ENCODE measurements at regions of chr5 and their contacts with region 1.

Region 1: GRCh38 chr5:55534436-55535198 is at the start of gene PLPP1:
- DNase-seq: peak; percentile 91 to 95 (median 93)
- H3K4me3 ChIP-seq: peak within 1 kb of the TSS; percentile 82
- H3K27ac ChIP-seq: peak within 1 kb of the TSS; percentile 95 to 97
- H3K4me1 ChIP-seq: peaks cover 5% of the 10 kb centered on the region
- H3K27me3 ChIP-seq: no peaks in the 10 kb centered on the region
- CTCF ChIP-seq: no peak
- EP300 ChIP-seq: no peak
- POLR2A ChIP-seq: peak; percentile 76
- total RNA-seq, gene PLPP1: 13.5 to 136 (median 33.5) TPM

Region 2: GRCh38 chr5:55421074-55421529 is 113.5 kb before region 1 on chr5:
- intact Hi-C with region 1: loop called in 1 of 4 experiments (anchors 10 kb)
- DNase-seq: no peak
- H3K4me3 ChIP-seq: no peak overlapping the region
- H3K27ac ChIP-seq: no peak overlapping the region
- H3K4me1 ChIP-seq: no peaks in the 10 kb centered on the region
- H3K27me3 ChIP-seq: no peaks in the 10 kb centered on the region
- CTCF ChIP-seq: no peak
- EP300 ChIP-seq: no peak
- POLR2A ChIP-seq: no peak